ENCODE measurements at regions of chr1 and their contacts with region 1.

Region 1: GRCh38 chr1:37692078-37692833 is at the start of gene CDCA8:
- DNase-seq: peak; percentile 97 to 99 (median 98)
- ATAC-seq: peak; percentile 87
- H3K4me3 ChIP-seq: peak within 1 kb of the TSS; percentile 73
- H3K4me3 Mint-ChIP-seq: peak within 1 kb of the TSS; percentile 98
- H3K27ac ChIP-seq: peak within 1 kb of the TSS in 1 of 2 donors; percentile 46
- H3K27ac Mint-ChIP-seq: peak within 1 kb of the TSS; percentile 90
- H3K4me1 ChIP-seq: peaks cover 41% of the 10 kb centered on the region
- H3K4me1 Mint-ChIP-seq: peaks cover 37% of the 10 kb centered on the region
- H3K27me3 ChIP-seq: no peaks in the 10 kb centered on the region
- H3K27me3 Mint-ChIP-seq: no peaks in the 10 kb centered on the region
- CTCF ChIP-seq: peak; percentile 63
- total RNA-seq, gene CDCA8: 0.25 to 0.36 TPM

Region 2: GRCh38 chr1:36463803-36464604 is 1228.3 kb before region 1 on chr1 and contains the start of gene MRPS15:
- CTCF ChIA-PET with region 1: no interaction called
- POLR2A ChIA-PET with region 1: no interaction called
- intact Hi-C with region 1: loop called in 1 of 2 experiments (anchors 5 kb)
- DNase-seq: peak; percentile 84 to 97 (median 93)
- ATAC-seq: peak; percentile 96
- H3K4me3 ChIP-seq: peak within 1 kb of the TSS; percentile 97
- H3K4me3 Mint-ChIP-seq: peak within 1 kb of the TSS; percentile 99
- H3K27ac ChIP-seq: peak within 1 kb of the TSS; percentile 90 to 93
- H3K27ac Mint-ChIP-seq: peak within 1 kb of the TSS; percentile 99
- H3K4me1 ChIP-seq: peaks cover 25% of the 10 kb centered on the region
- H3K4me1 Mint-ChIP-seq: peaks cover 31% of the 10 kb centered on the region
- H3K27me3 ChIP-seq: no peaks in the 10 kb centered on the region
- H3K27me3 Mint-ChIP-seq: no peaks in the 10 kb centered on the region
- CTCF ChIP-seq: no peak
- total RNA-seq, gene MRPS15: 35.4 to 36.4 TPM

Region 3: DNA sequence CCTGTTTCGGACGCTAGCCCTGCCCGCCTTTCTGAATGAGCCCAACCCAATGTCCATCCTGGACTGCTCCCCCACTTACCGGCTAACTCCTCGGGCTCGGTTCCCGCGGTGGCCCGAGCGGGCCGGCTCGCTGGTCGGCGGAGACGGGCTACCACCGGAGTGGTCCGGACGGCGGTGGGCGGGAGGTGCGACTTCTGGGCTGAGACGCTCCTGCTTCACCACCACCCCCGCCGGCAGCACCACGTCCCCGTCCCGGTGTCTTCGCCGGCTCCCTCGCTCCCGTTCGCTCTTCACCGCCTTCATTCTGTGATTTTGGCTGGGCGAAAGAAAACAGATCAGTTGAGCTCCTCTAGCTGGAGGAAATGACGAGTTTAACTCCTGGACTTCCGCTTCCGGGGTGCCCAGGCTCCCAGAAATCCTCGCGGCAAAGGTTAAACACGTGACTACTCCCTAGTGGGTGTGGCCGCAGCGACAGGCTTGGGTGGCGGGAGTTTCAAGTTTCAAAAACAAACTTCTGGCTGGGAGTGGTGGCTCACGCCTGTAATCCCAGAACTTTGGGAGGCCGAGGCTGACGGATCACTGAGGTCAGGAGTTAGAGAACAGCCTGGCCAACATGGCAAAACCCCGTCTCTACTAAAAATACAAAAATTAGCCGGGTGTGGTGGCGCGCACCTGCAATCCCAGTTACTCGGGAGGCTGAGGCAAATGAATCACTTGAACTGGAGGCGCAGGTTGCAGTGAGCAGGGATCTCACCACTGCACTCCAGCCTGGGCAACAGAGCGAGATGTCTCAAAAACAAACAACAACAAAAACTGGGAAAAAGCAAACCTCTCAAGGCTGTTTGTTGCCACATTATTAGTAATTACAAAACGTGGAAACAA is 138.1 kb before region 1 on chr1 and contains the start of gene SNIP1:
- CTCF ChIA-PET with region 1: no interaction called
- POLR2A ChIA-PET with region 1: interaction called, 4 read pairs
- intact Hi-C with region 1: loop called (anchors 1 to 2 kb)
- DNase-seq: peak; percentile 80 to 96 (median 88)
- ATAC-seq: peak; percentile 98
- H3K4me3 ChIP-seq: peak within 1 kb of the TSS; percentile 71
- H3K4me3 Mint-ChIP-seq: peak within 1 kb of the TSS; percentile 99
- H3K27ac ChIP-seq: peak within 1 kb of the TSS; percentile 83
- H3K27ac Mint-ChIP-seq: peak within 1 kb of the TSS; percentile 92
- H3K4me1 ChIP-seq: peaks cover 19% of the 10 kb centered on the region
- H3K4me1 Mint-ChIP-seq: peaks cover 45% of the 10 kb centered on the region
- H3K27me3 ChIP-seq: no peaks in the 10 kb centered on the region
- H3K27me3 Mint-ChIP-seq: peaks cover 4% of the 10 kb centered on the region
- CTCF ChIP-seq: no peak
- total RNA-seq, gene SNIP1: 57.9 to 64.7 TPM

Region 4: DNA sequence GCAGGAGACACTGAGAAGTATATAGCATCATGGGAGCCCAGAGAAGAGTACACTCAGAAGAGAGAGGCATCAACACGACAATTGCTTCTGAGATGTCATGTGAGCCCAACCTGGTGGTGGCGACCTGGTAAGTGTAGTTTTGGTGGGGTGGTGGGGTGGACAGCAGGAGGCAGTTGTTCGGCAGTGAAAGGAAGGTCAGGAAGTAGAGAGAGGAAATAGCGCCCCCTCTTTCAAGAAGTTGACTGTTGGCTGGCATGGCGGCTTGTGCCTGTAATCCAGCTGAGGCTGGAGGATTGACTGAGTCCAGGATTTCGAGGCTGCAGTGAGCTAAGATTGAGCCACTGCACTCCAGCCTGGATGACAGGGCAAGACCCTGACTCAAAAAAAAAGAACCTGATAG is 70.1 kb before region 1 on chr1:
- CTCF ChIA-PET with region 1: no interaction called
- POLR2A ChIA-PET with region 1: no interaction called
- intact Hi-C with region 1: no loop called
- DNase-seq: peak in 1 of 14 experiments; percentile 20
- ATAC-seq: no peak
- H3K4me3 ChIP-seq: no peak overlapping the region
- H3K4me3 Mint-ChIP-seq: no peak overlapping the region
- H3K27ac ChIP-seq: no peak overlapping the region
- H3K27ac Mint-ChIP-seq: no peak overlapping the region
- H3K4me1 ChIP-seq: no peaks in the 10 kb centered on the region
- H3K4me1 Mint-ChIP-seq: no peaks in the 10 kb centered on the region
- H3K27me3 ChIP-seq: peaks cover 14 to 32% of the 10 kb centered on the region in 2 experiments
- H3K27me3 Mint-ChIP-seq: peaks cover 48% of the 10 kb centered on the region
- CTCF ChIP-seq: no peak

Region 5: GRCh38 chr1:37859507-37860345 is 167.5 kb after region 1 on chr1 and contains the start of gene MTF1:
- CTCF ChIA-PET with region 1: interaction called, 3 read pairs
- POLR2A ChIA-PET with region 1: interaction called, 13 read pairs
- intact Hi-C with region 1: loop called (anchors 1 to 5 kb)
- DNase-seq: peak; percentile 91 to 99 (median 95)
- ATAC-seq: peak; percentile 98
- H3K4me3 ChIP-seq: peak within 1 kb of the TSS; percentile 88
- H3K4me3 Mint-ChIP-seq: peak within 1 kb of the TSS; percentile 98
- H3K27ac ChIP-seq: peak within 1 kb of the TSS; percentile 81 to 91
- H3K27ac Mint-ChIP-seq: peak within 1 kb of the TSS; percentile 87
- H3K4me1 ChIP-seq: peaks cover 18% of the 10 kb centered on the region
- H3K4me1 Mint-ChIP-seq: peaks cover 41% of the 10 kb centered on the region
- H3K27me3 ChIP-seq: no peaks in the 10 kb centered on the region
- H3K27me3 Mint-ChIP-seq: no peaks in the 10 kb centered on the region
- CTCF ChIP-seq: peak; percentile 91
- total RNA-seq, gene MTF1: 28.1 to 31.2 TPM

Region 6: GRCh38 chr1:38012363-38013226 is 320.3 kb after region 1 on chr1 and contains the start of gene UTP11:
- CTCF ChIA-PET with region 1: no interaction called
- POLR2A ChIA-PET with region 1: no interaction called
- intact Hi-C with region 1: loop called (anchors 5 to 10 kb)
- DNase-seq: peak; percentile 80 to 97 (median 85)
- ATAC-seq: peak; percentile 94
- H3K4me3 ChIP-seq: peak within 1 kb of the TSS; percentile 86
- H3K4me3 Mint-ChIP-seq: peak within 1 kb of the TSS; percentile 99
- H3K27ac ChIP-seq: peak within 1 kb of the TSS; percentile 75 to 83
- H3K27ac Mint-ChIP-seq: peak within 1 kb of the TSS; percentile 97
- H3K4me1 ChIP-seq: peaks cover 47% of the 10 kb centered on the region
- H3K4me1 Mint-ChIP-seq: peaks cover 39% of the 10 kb centered on the region
- H3K27me3 ChIP-seq: no peaks in the 10 kb centered on the region
- H3K27me3 Mint-ChIP-seq: no peaks in the 10 kb centered on the region
- CTCF ChIP-seq: no peak
- total RNA-seq, gene UTP11: 8.7 to 9.4 TPM